ENCODE measurements at regions of chr3 and their contacts with region 1.

Region 1: DNA sequence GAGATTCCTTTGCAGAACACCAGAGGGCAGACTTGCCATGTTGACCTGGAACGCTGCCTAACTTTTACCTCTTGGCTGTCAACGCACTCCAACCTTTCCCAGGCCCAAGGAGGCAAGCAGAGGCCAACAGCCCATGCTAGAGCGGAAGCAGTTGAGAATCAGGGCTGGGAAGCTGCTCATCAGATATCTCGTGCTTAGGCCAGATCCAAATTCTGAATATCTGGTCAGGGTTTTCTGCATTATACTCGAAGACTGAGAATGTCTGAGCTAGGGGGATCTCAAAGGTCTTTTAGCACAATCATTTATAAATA is 2.5 kb downstream of the XIRP1 start:
- DNase-seq: peak; percentile 82 to 89 (median 84)
- ATAC-seq: peak; percentile 92
- H3K4me3 ChIP-seq: no peak overlapping the region
- H3K27ac ChIP-seq: peak overlapping the region in 2 of 4 donors; percentile 23 to 54
- H3K4me1 ChIP-seq: peaks cover 7% of the 10 kb centered on the region
- H3K27me3 ChIP-seq: no peaks in the 10 kb centered on the region
- CTCF ChIP-seq: peak; percentile 59 to 93 (median 90)
- POLR2A ChIP-seq: no peak

Region 2: DNA sequence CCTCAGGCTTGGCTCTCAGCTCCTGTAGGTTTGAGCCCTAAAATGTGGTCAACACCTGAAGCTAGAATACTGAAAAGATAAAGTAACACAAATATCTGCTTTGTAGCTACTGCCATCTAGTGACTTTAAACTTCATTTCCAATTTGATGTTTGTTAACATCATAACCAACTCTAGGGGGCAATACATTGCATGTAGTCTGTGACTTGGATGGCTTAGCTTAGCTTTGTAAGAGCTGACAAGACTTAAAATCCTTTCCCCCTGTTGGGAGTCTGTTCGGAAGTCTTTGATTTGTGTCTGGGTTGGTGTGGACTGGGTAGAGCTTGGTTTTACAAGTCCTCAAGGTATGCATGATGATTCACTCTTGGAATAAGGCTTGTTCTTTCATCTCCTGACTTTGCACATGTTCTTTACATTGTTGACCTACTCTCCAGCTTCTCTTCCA is 189.9 kb before region 1 on chr3:
- intact Hi-C with region 1: no loop called
- DNase-seq: no peak
- ATAC-seq: peak; percentile 47
- H3K4me3 ChIP-seq: no peak overlapping the region
- H3K27ac ChIP-seq: no peak overlapping the region
- H3K4me1 ChIP-seq: no peaks in the 10 kb centered on the region
- H3K27me3 ChIP-seq: no peaks in the 10 kb centered on the region
- CTCF ChIP-seq: peak; percentile 47 to 93 (median 75)
- POLR2A ChIP-seq: no peak

Region 3: DNA sequence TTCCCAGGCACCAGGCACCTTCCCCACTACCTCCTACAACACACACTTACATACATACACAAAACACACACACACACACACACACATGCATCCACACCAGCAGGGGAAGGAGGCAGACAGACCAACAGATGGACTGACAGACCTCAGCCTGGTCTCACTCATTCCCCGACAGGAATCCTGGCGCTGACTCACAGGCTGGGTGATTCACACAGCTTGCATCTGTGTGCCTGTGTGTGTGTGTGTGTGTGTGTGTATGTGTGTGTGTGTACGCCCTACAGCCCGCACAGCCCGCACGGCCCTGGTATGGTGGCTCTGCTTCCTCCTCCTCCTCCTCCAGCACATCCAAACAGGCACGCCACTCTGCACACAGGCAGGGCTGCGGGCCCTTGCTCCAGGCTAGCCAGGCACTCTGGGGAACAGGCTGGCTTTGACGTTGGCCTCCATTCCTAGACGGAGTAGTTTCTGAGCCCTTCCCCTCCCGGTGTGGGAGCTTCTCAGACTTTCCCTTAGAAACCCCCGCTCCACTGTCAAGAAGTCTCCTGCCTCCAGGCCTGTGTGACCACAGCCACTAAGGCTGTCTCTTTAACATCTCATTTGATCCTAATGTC is 42.8 kb before region 1 on chr3:
- intact Hi-C with region 1: loop called (anchors 5 kb)
- DNase-seq: peak; percentile 59 to 85 (median 73)
- ATAC-seq: peak; percentile 25
- H3K4me3 ChIP-seq: no peak overlapping the region
- H3K27ac ChIP-seq: peak overlapping the region; percentile 33 to 100 (median 100)
- H3K4me1 ChIP-seq: peaks cover 90% of the 10 kb centered on the region
- H3K27me3 ChIP-seq: no peaks in the 10 kb centered on the region
- CTCF ChIP-seq: peak in 1 of 7 experiments; percentile 3
- POLR2A ChIP-seq: peak in 1 of 3 donors; percentile 28

Region 4: DNA sequence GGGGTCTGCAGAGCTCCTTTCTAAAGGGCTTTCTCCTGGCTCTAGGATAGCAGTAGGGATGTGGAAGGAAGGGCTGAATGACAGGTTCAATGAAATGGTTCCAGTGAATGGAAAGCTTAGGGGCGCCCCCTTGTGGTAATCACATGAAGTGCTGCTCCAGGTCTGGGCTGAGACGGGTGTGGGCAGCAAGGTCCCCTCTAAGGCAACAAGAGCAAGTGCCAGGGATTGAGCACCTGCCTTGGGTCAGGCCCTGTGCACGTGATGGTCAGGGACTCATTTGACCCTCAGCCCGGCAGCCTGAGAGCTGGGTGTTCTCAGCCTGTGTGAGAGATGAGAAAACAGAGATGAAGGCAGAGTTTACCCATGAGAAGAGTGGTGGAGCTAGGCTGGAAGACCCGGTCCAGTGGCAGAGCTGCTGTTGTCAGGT is 102.0 kb after region 1 on chr3:
- intact Hi-C with region 1: loop called (anchors 5 kb)
- DNase-seq: peak; percentile 57 to 73 (median 70)
- ATAC-seq: peak; percentile 50
- H3K4me3 ChIP-seq: no peak overlapping the region
- H3K27ac ChIP-seq: no peak overlapping the region
- H3K4me1 ChIP-seq: peaks cover 25% of the 10 kb centered on the region
- H3K27me3 ChIP-seq: no peaks in the 10 kb centered on the region
- CTCF ChIP-seq: peak; percentile 71 to 92 (median 81)
- POLR2A ChIP-seq: no peak

Measured in body of pancreas (tissue), 4 donors.